Heart right ventricle (tissue), 16 donors: ENCODE measurements at regions of chr12 and their contacts with region 1.

Region 1: DNA sequence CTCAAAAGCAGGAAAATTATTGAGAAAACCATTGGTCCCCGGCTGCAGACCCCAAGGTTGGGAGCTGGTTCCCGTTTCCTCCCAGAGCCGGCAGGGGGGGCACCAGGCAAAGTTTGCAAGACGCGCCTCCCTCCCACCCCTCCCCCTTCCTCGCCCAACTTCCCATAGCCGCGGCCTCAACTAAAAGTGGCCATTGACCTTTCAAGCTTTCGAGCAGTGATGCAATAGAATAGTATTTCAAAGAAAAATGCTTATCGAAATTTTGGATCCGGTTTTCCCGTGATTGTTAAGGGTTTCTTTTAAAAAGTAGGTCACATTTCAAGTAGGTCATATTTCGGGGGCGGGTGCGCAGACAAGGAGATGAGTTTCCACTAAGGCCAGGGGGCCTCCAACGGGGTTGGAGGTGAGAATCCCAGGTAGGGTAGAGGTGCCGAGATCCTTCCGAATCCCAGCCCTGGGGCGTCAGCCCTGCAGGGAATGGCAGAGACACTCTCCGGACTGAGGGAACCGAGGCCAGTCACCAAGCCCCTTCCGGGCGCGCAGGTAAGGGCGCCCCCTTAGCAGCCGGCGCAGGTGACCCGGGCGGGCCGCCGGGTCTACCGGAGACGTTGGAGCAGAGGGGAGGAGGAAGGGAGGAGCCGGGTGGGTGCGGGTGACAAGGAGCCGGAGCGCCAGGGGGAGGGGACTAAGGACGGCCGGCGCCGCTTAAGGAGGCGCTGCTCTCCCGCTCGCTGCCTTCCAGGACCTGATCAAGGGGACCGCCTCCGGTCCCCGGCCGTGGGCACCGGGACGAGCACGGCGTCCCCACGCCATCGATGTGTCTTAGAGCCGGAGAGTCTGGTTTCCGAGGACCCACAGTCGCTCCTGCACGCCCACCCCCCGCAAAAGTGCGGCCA is 2.6 kb upstream of the SOCS2 start:
- DNase-seq: peak; percentile 87 to 93
- ATAC-seq: peak; percentile 76 to 86 (median 84)
- H3K4me3 ChIP-seq: peak overlapping the region; percentile 62 to 100 (median 91)
- H3K27ac ChIP-seq: peak overlapping the region; percentile 93 to 100 (median 96)
- H3K4me1 ChIP-seq: peaks cover 0 to 29% (median 15%) of the 10 kb centered on the region in 9 donors
- H3K27me3 ChIP-seq: peaks cover 0 to 73% (median 0%) of the 10 kb centered on the region in 7 donors
- CTCF ChIP-seq: peak; percentile 75 to 93 (median 90)

Region 2: GRCh38 chr12:93591137-93591868 is 21.4 kb after region 1 on chr12:
- intact Hi-C with region 1: loop called in 6 of 10 experiments (anchors 1 to 2 kb)
- DNase-seq: peak; percentile 81 to 86
- ATAC-seq: peak; percentile 93 to 98 (median 94)
- H3K4me3 ChIP-seq: peak overlapping the region; percentile 22 to 67 (median 60)
- H3K27ac ChIP-seq: peak overlapping the region; percentile 71 to 95 (median 88)
- H3K4me1 ChIP-seq: peaks cover 0 to 45% (median 36%) of the 10 kb centered on the region in 9 donors
- H3K27me3 ChIP-seq: peaks cover 0 to 35% (median 0%) of the 10 kb centered on the region in 7 donors
- CTCF ChIP-seq: no peak

Region 3: DNA sequence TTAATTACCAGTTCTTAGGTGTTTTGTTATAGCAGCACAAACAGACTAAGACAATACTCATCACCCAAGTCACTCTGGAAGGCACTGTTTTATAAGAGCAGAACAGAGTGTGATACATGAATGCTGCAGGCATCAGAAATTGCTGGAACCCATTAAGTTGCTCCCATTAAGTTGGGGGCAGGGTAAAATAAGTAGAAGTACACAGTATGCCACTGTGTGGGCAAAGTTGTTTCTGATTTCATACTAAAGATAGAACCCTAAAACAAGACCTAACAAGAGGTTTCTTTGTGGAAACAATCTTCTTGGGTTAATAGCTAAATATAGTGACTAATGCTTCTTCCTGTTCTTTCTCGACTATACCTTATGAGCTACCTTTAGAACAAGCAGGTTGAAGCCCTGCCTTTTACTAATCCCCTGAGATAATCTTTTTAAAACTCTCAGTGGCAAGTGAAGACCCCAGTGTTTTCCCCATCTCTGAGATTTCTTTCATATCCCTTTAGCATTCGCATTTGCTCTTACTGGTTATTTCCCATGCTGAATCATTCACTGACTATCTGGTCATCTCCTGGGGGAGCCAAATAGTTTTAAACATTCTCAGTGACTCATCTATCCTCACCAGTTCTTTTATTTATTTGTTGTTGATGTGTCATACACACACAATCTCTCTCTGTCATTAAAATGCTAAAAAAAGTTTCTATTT is 54.8 kb after region 1 on chr12:
- intact Hi-C with region 1: no loop called
- DNase-seq: no peak
- ATAC-seq: peak in 2 of 8 donors; percentile 39 to 77
- H3K4me3 ChIP-seq: no peak overlapping the region
- H3K27ac ChIP-seq: peak overlapping the region in 1 of 10 donors; percentile 62
- H3K4me1 ChIP-seq: peaks cover 0 to 7% (median 0%) of the 10 kb centered on the region in 9 donors
- H3K27me3 ChIP-seq: no peaks in the 10 kb centered on the region
- CTCF ChIP-seq: no peak

Region 4: DNA sequence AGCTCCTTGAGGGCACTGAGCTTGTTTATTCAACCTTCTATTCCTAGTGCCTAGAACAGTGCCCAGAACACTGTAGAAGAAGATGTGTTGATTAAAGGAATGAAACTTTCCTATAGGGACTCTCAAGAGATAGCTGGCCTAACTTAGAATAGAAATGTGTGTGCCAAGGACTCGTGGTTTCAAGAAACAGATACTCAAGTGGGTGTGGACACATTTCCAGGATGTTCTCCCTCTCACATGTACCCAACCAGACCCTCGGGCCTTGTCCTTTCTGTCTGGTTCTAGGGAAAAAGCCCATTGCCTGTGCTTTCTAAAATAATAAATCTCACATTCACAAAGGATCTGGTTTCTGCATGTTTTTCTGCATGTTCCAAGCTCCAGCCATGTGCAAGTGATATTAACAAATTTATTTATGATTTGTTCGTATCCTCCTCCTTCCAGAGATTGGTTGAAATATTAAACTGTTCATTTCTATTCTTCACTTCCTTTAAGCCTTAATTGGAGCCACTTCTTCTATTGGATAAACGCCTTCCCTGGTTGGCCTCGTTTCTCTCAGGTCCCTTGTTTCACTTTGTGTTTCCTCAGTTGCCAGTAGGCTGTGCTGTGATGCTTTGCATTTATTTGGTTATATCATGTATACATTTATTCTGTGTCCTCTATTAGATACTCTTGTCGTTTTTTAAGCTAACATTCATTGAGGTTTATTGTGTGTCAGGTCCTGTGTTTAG is 197.1 kb after region 1 on chr12:
- intact Hi-C with region 1: loop called in 3 of 10 experiments (anchors 5 to 10 kb)
- DNase-seq: peak in 1 of 2 donors; percentile 69
- ATAC-seq: peak; percentile 71 to 91 (median 87)
- H3K4me3 ChIP-seq: no peak overlapping the region
- H3K27ac ChIP-seq: peak overlapping the region; percentile 5 to 77 (median 63)
- H3K4me1 ChIP-seq: peaks cover 7 to 69% (median 41%) of the 10 kb centered on the region in 9 donors
- H3K27me3 ChIP-seq: no peaks in the 10 kb centered on the region
- CTCF ChIP-seq: peak; percentile 30 to 83 (median 68)

Region 5: DNA sequence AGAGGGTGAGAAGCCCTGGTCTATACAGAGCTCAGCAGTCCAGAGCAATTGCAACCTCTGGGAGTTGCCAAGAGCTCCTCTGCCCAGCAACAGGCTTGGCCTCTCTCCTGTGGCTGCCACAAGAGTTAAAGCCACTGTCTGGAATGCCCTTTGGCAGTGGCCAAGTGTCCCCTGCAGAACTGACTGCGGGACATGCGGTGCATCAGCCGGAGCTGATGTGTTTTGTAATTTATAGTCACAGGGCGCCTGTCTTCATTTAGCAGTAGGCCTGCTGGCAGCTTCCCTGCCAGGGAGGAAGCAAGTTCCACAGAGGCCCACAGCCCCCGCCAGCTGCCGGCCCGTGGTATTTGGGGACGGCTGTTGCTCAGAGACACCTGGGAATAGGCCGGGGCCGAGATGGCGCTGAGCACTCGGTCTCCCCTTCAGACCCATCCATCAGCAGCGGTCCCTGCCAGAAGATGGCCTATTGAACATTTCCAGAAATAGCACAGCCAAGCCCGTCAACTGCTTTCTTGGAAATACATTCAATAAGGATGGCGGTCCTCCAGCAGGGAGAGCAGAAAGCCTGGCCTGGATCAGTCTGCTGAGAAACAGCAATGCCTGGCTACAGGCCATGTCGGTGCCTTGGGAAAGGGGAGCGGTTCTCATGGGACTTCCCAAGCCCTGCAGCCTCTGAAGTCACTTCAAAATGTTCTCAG is 324.6 kb after region 1 on chr12:
- intact Hi-C with region 1: loop called in 4 of 10 experiments (anchors 1 to 5 kb)
- DNase-seq: peak; percentile 85 to 95
- ATAC-seq: peak; percentile 88 to 96 (median 90)
- H3K4me3 ChIP-seq: peak overlapping the region in 7 of 10 donors; percentile 7 to 35 (median 28)
- H3K27ac ChIP-seq: peak overlapping the region; percentile 70 to 94 (median 86)
- H3K4me1 ChIP-seq: peaks cover 20 to 55% (median 42%) of the 10 kb centered on the region in 9 donors
- H3K27me3 ChIP-seq: no peaks in the 10 kb centered on the region
- CTCF ChIP-seq: peak in 2 of 9 donors; percentile 5 to 8

Region 6: DNA sequence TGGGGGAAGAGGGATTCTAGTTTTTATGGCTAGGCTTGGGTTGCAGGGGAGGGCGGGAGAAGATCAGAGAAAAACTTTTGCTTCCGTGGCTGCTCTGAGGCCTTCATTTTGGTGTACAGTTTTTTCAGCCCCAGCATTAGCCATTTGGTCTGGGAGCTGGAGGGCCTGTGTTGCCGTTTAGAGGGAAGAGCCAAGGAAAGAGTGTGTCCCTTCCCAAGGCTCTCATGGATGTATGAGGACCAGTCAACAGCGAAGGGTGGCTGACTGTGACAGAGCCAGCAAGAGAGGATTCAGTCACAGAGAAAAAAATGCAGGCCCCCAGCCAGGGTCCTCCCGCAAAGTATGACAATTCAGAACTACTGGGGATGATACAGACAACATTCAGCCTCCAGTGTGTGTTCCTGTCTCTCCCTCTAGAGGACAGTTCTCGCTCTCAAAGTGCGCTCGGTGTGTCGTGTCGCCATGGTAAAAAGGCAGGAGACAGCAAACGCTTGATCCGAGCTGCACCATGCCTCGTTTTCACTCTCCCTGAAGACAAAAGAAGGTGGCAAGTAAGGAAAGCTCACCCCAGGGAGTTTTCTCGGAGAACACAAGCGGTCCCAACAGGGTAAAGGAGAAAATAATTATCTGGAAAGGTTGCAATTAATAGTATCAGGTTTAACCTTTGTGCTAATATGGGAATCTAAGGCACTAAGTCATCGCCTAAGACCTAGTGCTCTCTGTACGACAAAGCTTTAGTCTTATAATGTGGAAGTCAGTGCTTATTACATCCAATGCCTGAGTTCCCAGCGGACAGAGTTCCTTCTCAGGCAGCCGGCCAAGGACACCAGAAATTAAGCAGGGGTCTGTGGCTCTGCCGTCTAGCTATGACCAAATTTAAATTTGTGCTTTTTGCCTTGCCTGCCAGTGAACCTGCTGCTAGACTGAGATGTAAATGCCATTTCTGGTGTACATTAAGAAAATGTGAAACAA is 421.2 kb after region 1 on chr12:
- intact Hi-C with region 1: loop called in 3 of 10 experiments (anchors 5 to 10 kb)
- DNase-seq: peak; percentile 41 to 68
- ATAC-seq: peak; percentile 60 to 97 (median 94)
- H3K4me3 ChIP-seq: peak overlapping the region in 6 of 10 donors; percentile 22 to 33 (median 28)
- H3K27ac ChIP-seq: peak overlapping the region in 9 of 10 donors; percentile 27 to 72 (median 51)
- H3K4me1 ChIP-seq: peaks cover 0 to 23% (median 12%) of the 10 kb centered on the region in 9 donors
- H3K27me3 ChIP-seq: no peaks in the 10 kb centered on the region
- CTCF ChIP-seq: peak; percentile 19 to 74 (median 49)